MCF 10A (cell line): ENCODE measurements at regions of chr1 and their contacts with region 1.

Region 1: GRCh38 chr1:175154629-175155472 is 37.7 kb downstream of the KIAA0040 start:
- DNase-seq: peak; percentile 82
- H3K4me3 Mint-ChIP-seq: no peak overlapping the region
- H3K27ac Mint-ChIP-seq: no peak overlapping the region
- H3K4me1 Mint-ChIP-seq: peaks cover 17% of the 10 kb centered on the region
- H3K27me3 Mint-ChIP-seq: peaks cover 41% of the 10 kb centered on the region
- CTCF ChIP-seq: peak; percentile 95

Region 2: DNA sequence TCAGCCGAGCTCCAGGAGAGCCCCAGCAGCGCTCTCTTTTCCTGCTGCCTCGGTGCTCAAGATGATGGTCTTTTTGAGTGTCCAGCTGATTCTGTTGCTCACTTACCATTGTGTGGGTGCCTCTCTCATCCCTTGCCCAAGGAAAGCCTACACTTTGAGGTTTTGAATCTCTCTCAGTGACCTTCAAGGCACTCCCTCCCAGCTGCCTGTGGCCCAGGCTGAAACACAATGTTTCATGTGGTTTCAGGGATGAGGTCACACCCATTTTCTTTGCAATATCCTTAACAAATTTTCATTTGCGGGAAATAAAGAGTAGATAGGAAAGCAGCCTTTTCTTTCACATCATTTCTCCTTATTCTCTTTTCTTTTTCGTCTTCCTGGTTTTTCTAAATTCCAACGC is 119.0 kb before region 1 on chr1:
- CTCF ChIA-PET with region 1: interaction called, 279 read pairs
- POLR2A ChIA-PET with region 1: no interaction called
- intact Hi-C with region 1: no loop called
- DNase-seq: no peak
- H3K4me3 Mint-ChIP-seq: no peak overlapping the region
- H3K27ac Mint-ChIP-seq: no peak overlapping the region
- H3K4me1 Mint-ChIP-seq: peaks cover 10% of the 10 kb centered on the region
- H3K27me3 Mint-ChIP-seq: no peaks in the 10 kb centered on the region
- CTCF ChIP-seq: no peak

Region 3: GRCh38 chr1:175169305-175170018 is 14.6 kb after region 1 on chr1:
- CTCF ChIA-PET with region 1: interaction called, 415 read pairs
- POLR2A ChIA-PET with region 1: interaction called, 4 read pairs
- intact Hi-C with region 1: no loop called
- DNase-seq: peak; percentile 68
- H3K4me3 Mint-ChIP-seq: no peak overlapping the region
- H3K27ac Mint-ChIP-seq: peak overlapping the region; percentile 21
- H3K4me1 Mint-ChIP-seq: peaks cover 24% of the 10 kb centered on the region
- H3K27me3 Mint-ChIP-seq: no peaks in the 10 kb centered on the region
- CTCF ChIP-seq: no peak

Region 4: DNA sequence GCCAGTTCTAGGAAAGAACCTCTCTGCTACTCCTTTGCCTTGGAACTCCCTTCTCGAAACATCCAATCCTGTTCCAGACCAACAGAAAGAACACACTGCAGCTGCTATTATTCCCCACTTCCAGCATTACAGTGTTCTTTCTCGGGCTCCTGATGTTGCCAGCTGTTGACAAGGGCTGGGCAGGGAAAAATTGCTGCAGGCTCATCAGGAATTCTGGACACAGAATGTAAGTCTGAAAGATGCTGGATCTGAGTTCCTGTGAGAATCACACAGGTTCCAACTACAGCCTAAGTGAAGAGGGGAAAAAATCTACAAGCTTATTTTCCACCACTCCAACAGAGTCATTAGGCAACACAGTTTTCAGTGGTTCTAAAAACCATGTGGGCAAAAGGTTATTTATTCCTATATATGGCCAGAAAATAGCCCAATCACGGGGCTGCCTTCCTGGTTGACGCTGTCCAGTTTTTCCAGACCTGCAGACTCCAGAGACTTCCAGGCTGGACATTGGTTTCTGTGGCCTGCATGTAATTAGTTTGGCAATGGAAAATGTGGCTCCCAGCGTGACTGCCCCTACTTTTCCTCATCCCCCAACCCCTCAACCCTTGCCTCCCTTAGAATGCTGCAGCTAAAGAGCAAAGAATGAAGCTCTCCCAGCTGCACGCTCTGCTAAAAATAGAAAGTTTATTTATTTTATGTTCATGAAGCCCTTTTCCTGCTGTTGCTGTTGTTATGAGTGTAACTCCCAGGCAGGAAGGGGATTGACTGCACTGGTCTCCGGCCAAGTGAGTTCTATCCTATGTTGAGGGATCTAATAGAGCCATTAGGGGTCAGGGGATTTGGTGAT is 46.0 kb after region 1 on chr1:
- CTCF ChIA-PET with region 1: interaction called, 74 read pairs
- POLR2A ChIA-PET with region 1: no interaction called
- intact Hi-C with region 1: no loop called
- DNase-seq: no peak
- H3K4me3 Mint-ChIP-seq: no peak overlapping the region
- H3K27ac Mint-ChIP-seq: no peak overlapping the region
- H3K4me1 Mint-ChIP-seq: peaks cover 22% of the 10 kb centered on the region
- H3K27me3 Mint-ChIP-seq: no peaks in the 10 kb centered on the region
- CTCF ChIP-seq: no peak

Region 5: GRCh38 chr1:175252561-175252960 is 97.7 kb after region 1 on chr1:
- CTCF ChIA-PET with region 1: interaction called, 12 read pairs
- POLR2A ChIA-PET with region 1: no interaction called
- intact Hi-C with region 1: no loop called
- DNase-seq: no peak
- H3K4me3 Mint-ChIP-seq: no peak overlapping the region
- H3K27ac Mint-ChIP-seq: no peak overlapping the region
- H3K4me1 Mint-ChIP-seq: no peaks in the 10 kb centered on the region
- H3K27me3 Mint-ChIP-seq: no peaks in the 10 kb centered on the region
- CTCF ChIP-seq: no peak

Region 6: DNA sequence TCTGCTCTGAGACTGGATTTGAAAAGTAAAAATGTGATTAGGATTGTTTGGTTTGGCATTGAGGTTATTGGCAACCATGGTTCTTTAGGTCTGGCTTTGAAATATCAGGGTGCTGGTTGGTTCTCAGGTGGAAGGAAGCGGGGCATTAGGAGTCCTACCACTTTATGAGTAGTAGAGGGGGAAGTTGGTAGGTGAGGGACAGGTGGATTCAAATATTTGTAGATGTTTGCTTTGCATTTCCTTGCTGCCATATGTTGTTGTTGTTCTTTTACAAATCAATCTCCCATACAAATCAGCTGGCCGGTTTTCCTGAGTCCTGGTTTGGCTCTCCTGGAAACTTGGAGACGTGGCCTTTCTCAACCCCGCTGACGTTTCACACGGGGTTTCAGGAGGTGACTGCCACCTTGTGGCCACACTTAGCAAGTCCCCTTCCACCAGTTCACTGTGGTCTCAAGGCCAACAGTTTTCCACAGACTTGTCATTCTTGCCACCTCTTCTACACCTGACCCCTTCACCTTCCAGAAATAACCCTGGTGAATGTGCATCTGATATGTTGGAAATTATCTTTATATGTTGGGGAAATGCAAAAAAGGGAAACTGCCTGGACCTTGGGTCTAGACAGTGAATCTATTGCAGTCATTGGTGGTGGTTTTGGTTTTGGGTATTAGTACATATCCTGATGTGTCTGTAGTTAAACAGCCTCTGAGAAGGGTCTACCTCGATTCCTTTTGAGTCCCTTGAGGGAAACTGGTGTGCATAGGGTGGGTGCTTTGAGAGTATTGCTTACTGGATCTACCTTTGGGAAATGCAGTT is 164.8 kb after region 1 on chr1:
- CTCF ChIA-PET with region 1: interaction called, 723 read pairs
- POLR2A ChIA-PET with region 1: interaction called, 9 read pairs
- intact Hi-C with region 1: loop called (anchors 1 kb)
- DNase-seq: peak; percentile 85
- H3K4me3 Mint-ChIP-seq: no peak overlapping the region
- H3K27ac Mint-ChIP-seq: no peak overlapping the region
- H3K4me1 Mint-ChIP-seq: peaks cover 5% of the 10 kb centered on the region
- H3K27me3 Mint-ChIP-seq: no peaks in the 10 kb centered on the region
- CTCF ChIP-seq: peak; percentile 94

Region 7: GRCh38 chr1:175471039-175471800 is 316.4 kb after region 1 on chr1:
- CTCF ChIA-PET with region 1: interaction called, 11 read pairs
- POLR2A ChIA-PET with region 1: no interaction called
- intact Hi-C with region 1: no loop called
- DNase-seq: peak; percentile 95
- H3K4me3 Mint-ChIP-seq: no peak overlapping the region
- H3K27ac Mint-ChIP-seq: peak overlapping the region; percentile 65
- H3K4me1 Mint-ChIP-seq: peaks cover 30% of the 10 kb centered on the region
- H3K27me3 Mint-ChIP-seq: peaks cover 72% of the 10 kb centered on the region
- CTCF ChIP-seq: no peak

Region 8: DNA sequence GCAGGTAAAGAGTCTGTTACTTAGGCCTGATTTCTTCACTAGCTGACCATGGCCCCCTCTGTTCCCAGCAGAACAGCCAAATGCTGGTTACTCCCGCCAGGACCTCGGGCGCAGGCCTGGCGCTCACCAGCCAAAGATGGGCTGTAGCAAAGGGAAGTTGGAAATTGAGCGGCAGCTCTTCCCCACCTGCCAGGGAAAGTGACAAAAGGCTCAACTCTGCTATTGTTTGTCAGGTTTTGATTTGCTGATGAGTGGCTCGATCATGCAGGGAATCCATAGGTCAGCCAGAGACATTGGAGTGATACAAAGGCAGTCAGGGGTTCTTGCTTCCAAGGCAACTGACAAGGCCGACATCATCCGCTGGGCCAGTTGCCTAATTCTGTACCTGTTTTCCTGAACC is 1889.5 kb after region 1 on chr1:
- CTCF ChIA-PET with region 1: no interaction called
- POLR2A ChIA-PET with region 1: no interaction called
- intact Hi-C with region 1: no loop called
- DNase-seq: no peak
- H3K4me3 Mint-ChIP-seq: no peak overlapping the region
- H3K27ac Mint-ChIP-seq: no peak overlapping the region
- H3K4me1 Mint-ChIP-seq: no peaks in the 10 kb centered on the region
- H3K27me3 Mint-ChIP-seq: no peaks in the 10 kb centered on the region
- CTCF ChIP-seq: no peak